ENCODE measurements at regions of chr10 and their contacts with region 1.

Region 1: DNA sequence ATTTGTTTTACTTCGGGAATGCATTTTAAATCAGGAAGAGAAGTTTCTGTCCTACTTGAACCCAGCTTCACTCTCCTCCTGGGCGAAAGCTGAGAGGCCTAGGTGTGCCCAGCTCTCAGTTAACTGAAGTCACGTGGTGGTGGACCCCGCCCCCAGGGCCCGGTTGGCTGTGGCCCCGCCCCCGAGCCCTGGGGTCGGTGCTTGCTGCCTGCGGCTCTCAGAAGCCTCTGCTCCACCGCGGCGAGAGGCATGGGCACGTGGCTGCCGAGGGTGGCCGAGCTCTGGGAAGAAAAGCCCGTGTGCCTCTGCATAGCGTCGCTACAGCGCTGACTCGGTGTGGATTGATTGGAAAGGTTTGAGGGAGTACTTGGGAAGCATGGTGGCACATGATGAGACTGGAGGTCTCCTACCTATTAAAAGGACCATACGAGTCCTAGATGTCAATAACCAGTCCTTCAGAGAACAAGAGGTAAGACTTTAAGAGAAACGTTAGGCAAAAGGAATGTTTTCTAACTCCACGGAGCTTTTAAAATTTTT is 34.1 kb downstream of the NET1 start:
- DNase-seq: no peak
- ATAC-seq: no peak
- H3K4me3 ChIP-seq: peak overlapping the region; percentile 18; the same call in 1 of the 2 replicates
- H3K27ac ChIP-seq: no peak overlapping the region
- H3K4me1 ChIP-seq: peaks cover 42% of the 10 kb centered on the region
- H3K27me3 ChIP-seq: no peaks in the 10 kb centered on the region
- CTCF ChIP-seq: no peak
- EP300 ChIP-seq: no peak
- POLR2A ChIP-seq: peak; percentile 87
- RAD21 ChIP-seq: no peak

Region 2: GRCh38 chr10:5461914-5462840 is 15.7 kb after region 1 on chr10:
- CTCF ChIA-PET with region 1: interaction called, 22 read pairs
- POLR2A ChIA-PET with region 1: no interaction called
- RAD21 ChIA-PET with region 1: interaction called, 4 read pairs
- SMC1A ChIA-PET with region 1: interaction called, 5 read pairs
- in situ Hi-C with region 1: no loop called
- intact Hi-C with region 1: no loop called
- DNase-seq: no peak
- ATAC-seq: no peak
- H3K4me3 ChIP-seq: no peak overlapping the region
- H3K27ac ChIP-seq: no peak overlapping the region
- H3K4me1 ChIP-seq: no peaks in the 10 kb centered on the region
- H3K27me3 ChIP-seq: no peaks in the 10 kb centered on the region
- CTCF ChIP-seq: no peak
- EP300 ChIP-seq: no peak
- POLR2A ChIP-seq: no peak
- RAD21 ChIP-seq: no peak

Region 3: GRCh38 chr10:5609952-5610616 is 163.6 kb after region 1 on chr10:
- CTCF ChIA-PET with region 1: interaction called, 5 read pairs
- POLR2A ChIA-PET with region 1: no interaction called
- RAD21 ChIA-PET with region 1: no interaction called
- SMC1A ChIA-PET with region 1: interaction called, 3 read pairs
- in situ Hi-C with region 1: no loop called
- intact Hi-C with region 1: loop called (anchors 5 kb)
- DNase-seq: no peak
- ATAC-seq: no peak
- H3K4me3 ChIP-seq: no peak overlapping the region
- H3K27ac ChIP-seq: no peak overlapping the region
- H3K4me1 ChIP-seq: no peaks in the 10 kb centered on the region
- H3K27me3 ChIP-seq: peaks cover 4 to 5% of the 10 kb centered on the region in 2 experiments
- CTCF ChIP-seq: no peak
- EP300 ChIP-seq: no peak
- POLR2A ChIP-seq: no peak
- RAD21 ChIP-seq: no peak

Region 4: DNA sequence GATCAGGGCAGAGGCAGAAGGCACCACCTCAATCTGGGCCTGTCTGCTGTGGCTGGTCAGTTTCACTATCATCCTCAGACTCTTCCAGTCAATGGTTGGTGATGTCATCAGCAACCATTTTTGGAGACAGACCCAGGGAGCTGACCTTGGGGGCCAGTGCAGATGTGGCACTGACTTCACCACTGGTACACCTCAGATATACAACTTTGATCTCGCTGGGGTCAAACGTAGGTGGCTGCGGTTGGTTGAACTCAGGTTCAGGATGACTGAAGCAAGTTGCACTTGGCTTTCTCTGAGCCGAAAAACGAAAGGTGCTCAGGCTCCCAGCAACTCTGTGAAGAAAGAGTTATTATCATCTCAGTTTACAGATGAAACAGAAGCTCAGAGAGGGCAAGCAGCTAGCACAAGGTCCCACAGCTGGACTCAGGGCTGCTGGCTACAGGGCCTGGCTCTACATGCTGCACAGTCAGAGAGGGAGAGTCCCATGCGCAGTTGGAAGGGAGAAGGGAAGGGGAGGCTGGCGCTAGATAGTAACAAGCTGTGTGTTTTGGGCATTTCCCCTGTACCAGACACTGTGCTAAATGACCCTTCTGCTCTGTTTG is 416.0 kb after region 1 on chr10:
- CTCF ChIA-PET with region 1: no interaction called
- POLR2A ChIA-PET with region 1: interaction called, 3 read pairs
- RAD21 ChIA-PET with region 1: no interaction called
- SMC1A ChIA-PET with region 1: no interaction called
- in situ Hi-C with region 1: no loop called
- intact Hi-C with region 1: loop called (anchors 10 kb)
- DNase-seq: peak; percentile 94
- ATAC-seq: peak; percentile 96
- H3K4me3 ChIP-seq: peak overlapping the region; percentile 34
- H3K27ac ChIP-seq: peak overlapping the region; percentile 73
- H3K4me1 ChIP-seq: peaks cover 20% of the 10 kb centered on the region
- H3K27me3 ChIP-seq: no peaks in the 10 kb centered on the region
- CTCF ChIP-seq: no peak
- EP300 ChIP-seq: peak; percentile 74 to 88; a peak in 2 of 4 replicates
- POLR2A ChIP-seq: peak; percentile 46; the same call in 1 of the 2 replicates
- RAD21 ChIP-seq: no peak

Region 5: DNA sequence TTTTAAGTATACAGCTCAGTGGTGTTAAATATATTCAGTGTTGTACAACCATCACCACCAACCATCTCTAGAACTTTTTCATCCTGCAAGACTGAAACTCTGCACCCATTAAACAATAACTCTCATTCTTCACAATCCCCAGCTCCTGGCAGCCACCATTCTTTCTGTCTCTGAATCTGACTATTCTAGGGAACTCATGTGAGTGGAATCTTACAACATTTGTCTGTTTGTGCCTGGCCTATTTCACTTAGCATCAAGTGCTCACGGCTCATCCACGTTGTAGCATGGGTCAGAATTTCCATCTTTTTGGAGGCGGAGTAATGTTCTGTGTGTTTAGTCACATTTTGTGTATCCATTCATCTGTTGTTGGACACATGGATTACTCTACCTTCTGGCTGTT is 715.5 kb after region 1 on chr10:
- CTCF ChIA-PET with region 1: no interaction called
- POLR2A ChIA-PET with region 1: no interaction called
- RAD21 ChIA-PET with region 1: no interaction called
- SMC1A ChIA-PET with region 1: no interaction called
- in situ Hi-C with region 1: no loop called
- intact Hi-C with region 1: no loop called
- DNase-seq: no peak
- ATAC-seq: no peak
- H3K4me3 ChIP-seq: no peak overlapping the region
- H3K27ac ChIP-seq: no peak overlapping the region
- H3K4me1 ChIP-seq: no peaks in the 10 kb centered on the region; the same call in 1 of the 2 replicates
- H3K27me3 ChIP-seq: no peaks in the 10 kb centered on the region
- CTCF ChIP-seq: no peak
- EP300 ChIP-seq: no peak
- POLR2A ChIP-seq: no peak
- RAD21 ChIP-seq: no peak

Measured in GM12878 (cell line).